ENCODE measurements at regions of chr2 and their contacts with region 1.

Region 1: GRCh38 chr2:160994141-160995002 is 165.9 kb upstream of the TANK start:
- DNase-seq: peak; percentile 66
- ATAC-seq: peak; percentile 81
- H3K4me3 Mint-ChIP-seq: no peak overlapping the region
- H3K27ac Mint-ChIP-seq: no peak overlapping the region; the same call in 1 of the 2 replicates
- H3K4me1 Mint-ChIP-seq: peaks cover 9% of the 10 kb centered on the region
- H3K27me3 Mint-ChIP-seq: no peaks in the 10 kb centered on the region
- CTCF ChIP-seq: peak; percentile 70

Region 2: DNA sequence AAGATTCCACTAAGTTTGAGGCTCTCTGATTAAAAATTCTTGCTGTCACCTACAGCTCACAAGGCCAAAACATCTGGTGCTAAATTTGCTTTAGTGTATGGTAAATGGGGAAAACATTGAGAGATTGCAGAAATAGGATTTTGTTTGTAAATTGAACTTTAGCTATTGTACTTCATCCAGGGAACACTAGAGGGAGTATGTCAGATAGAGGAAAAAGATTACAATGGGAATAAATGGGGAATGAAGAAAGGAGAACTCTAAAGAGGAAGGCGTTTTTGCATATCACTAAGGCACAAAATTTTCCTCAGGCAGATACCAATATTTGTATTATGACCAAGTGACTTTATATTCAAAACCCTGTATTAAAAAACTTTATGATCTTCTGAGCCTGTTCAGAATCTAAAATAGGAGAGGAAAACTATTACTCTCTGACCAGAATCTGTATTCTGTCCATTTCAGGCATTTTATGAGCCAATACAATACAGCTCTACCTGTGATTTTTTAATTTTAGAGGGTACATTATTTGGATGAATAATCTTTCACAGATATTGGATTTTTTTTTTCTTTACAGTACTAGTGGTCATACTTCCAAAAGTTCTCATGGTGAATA is 742.0 kb before region 1 on chr2:
- CTCF ChIA-PET with region 1: interaction called, 12 read pairs
- POLR2A ChIA-PET with region 1: no interaction called
- DNase-seq: no peak
- ATAC-seq: peak; percentile 18; the same call in 1 of the 2 replicates
- H3K4me3 Mint-ChIP-seq: no peak overlapping the region
- H3K27ac Mint-ChIP-seq: no peak overlapping the region
- H3K4me1 Mint-ChIP-seq: 0 out of 2 replicates have a peak, but pooled peaks cover 5% of the 10 kb centered on the region
- H3K27me3 Mint-ChIP-seq: no peaks in the 10 kb centered on the region
- CTCF ChIP-seq: peak; percentile 54; the same call in 1 of the 2 replicates

Region 3: GRCh38 chr2:160269803-160270570 is 724.4 kb before region 1 on chr2:
- CTCF ChIA-PET with region 1: interaction called, 10 read pairs
- POLR2A ChIA-PET with region 1: interaction called, 3 read pairs
- DNase-seq: peak; percentile 79
- ATAC-seq: peak; percentile 79
- H3K4me3 Mint-ChIP-seq: peak overlapping the region; percentile 72
- H3K27ac Mint-ChIP-seq: peak overlapping the region; percentile 92
- H3K4me1 Mint-ChIP-seq: peaks cover 36% of the 10 kb centered on the region
- H3K27me3 Mint-ChIP-seq: peaks cover 24% of the 10 kb centered on the region
- CTCF ChIP-seq: no peak

Region 4: DNA sequence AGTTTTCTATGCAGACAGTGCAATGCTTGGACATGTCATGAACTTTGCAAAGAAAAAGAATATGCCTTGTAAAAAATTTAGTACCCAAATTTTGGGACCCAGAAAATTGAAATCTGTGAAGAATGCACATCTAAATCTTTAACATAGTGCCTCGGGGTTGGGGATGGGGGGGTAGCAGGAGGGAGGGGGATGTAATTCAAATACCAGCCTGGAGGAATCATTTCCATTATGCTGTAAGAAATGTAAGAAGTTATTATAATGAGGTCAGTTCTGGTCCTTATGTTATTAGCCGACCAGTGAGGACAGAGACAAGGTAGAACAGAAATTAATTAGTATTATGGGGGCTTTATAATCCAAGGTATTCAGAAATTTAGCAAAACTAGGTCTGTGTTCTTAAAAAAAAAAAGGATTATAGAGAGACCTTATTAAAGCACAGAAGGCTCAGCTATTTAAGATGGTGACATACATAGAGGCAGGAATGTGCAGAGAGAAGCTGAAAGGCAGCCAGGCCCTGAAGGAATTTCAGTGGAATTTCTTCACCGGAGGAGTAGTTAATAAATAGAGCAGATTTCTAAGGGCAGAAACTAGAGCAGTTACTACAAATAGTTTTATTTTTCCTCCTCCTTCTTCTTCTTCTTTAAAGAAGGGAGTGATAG is 411.8 kb before region 1 on chr2:
- CTCF ChIA-PET with region 1: interaction called, 21 read pairs
- POLR2A ChIA-PET with region 1: no interaction called
- DNase-seq: no peak
- ATAC-seq: peak; percentile 65
- H3K4me3 Mint-ChIP-seq: no peak overlapping the region
- H3K27ac Mint-ChIP-seq: no peak overlapping the region
- H3K4me1 Mint-ChIP-seq: peaks cover 48% of the 10 kb centered on the region
- H3K27me3 Mint-ChIP-seq: no peaks in the 10 kb centered on the region
- CTCF ChIP-seq: no peak

Region 5: DNA sequence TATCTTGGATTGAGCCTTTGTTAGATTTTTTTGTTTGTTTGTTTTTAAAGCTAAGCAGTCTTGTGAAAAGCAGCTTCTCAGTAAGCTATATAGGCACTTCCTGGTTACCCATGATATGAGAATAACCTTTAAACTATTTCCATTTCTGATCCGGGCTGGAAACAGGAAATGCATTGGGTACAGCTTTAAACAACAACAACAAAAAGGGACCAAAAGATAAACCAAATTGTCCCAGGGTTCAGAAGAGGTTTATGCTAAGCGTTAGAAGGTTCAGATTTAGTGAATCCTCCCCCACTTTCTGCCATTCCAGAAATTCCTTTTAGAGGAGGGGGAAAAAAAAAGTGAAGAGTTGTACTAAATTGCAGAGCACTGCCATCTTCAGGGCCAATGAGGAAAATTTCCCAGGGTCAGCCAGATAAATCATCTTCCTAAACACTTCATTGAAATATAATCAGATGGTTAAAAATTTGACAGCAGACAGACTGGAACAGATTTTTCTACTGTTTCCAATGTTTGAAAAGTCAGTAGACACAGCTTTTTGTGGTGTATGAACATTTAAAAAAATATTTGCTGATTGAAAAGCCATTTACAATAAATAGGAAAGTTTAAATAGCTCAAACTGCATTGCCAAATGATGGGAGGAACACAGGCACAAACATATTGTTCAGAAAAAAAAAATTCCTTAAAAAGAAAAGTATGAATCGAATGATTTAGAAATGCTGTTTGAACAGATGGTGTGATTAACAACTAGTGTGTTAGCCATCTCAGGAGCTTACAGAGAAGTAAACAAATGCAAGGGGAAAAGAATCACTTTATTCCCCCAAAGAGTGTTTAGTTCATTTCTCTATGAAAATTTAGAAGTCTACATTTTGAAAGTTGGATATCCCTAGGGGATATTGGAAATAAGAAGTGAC is 24.1 kb before region 1 on chr2:
- CTCF ChIA-PET with region 1: interaction called, 15 read pairs
- POLR2A ChIA-PET with region 1: no interaction called
- DNase-seq: peak; percentile 29
- ATAC-seq: peak; percentile 91
- H3K4me3 Mint-ChIP-seq: no peak overlapping the region
- H3K27ac Mint-ChIP-seq: peak overlapping the region; percentile 94
- H3K4me1 Mint-ChIP-seq: peaks cover 8% of the 10 kb centered on the region
- H3K27me3 Mint-ChIP-seq: no peaks in the 10 kb centered on the region; the same call in 1 of the 2 replicates
- CTCF ChIP-seq: no peak

Region 6: DNA sequence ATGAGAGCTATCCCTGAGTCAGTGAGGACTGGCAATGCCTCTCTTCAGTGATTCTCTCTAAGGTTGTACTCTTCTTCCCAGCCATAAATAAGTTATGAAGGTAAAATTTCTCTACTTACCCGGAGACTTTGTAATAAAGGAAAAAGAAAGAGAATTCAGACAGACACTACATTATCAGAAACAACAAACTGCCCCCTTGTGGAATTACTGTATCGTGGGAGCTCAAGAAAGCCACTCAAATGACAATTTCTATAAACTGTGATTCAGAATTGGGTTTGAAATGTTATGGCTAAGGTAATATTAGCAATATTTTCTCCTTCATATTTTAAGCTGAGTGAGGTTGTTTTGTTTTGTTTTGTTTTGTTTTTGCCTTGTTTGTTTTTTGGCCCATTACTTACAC is 10.0 kb after region 1 on chr2:
- CTCF ChIA-PET with region 1: interaction called, 13 read pairs
- POLR2A ChIA-PET with region 1: no interaction called
- DNase-seq: no peak
- ATAC-seq: no peak
- H3K4me3 Mint-ChIP-seq: no peak overlapping the region
- H3K27ac Mint-ChIP-seq: no peak overlapping the region
- H3K4me1 Mint-ChIP-seq: peaks cover 9% of the 10 kb centered on the region
- H3K27me3 Mint-ChIP-seq: no peaks in the 10 kb centered on the region
- CTCF ChIP-seq: no peak

Region 7: DNA sequence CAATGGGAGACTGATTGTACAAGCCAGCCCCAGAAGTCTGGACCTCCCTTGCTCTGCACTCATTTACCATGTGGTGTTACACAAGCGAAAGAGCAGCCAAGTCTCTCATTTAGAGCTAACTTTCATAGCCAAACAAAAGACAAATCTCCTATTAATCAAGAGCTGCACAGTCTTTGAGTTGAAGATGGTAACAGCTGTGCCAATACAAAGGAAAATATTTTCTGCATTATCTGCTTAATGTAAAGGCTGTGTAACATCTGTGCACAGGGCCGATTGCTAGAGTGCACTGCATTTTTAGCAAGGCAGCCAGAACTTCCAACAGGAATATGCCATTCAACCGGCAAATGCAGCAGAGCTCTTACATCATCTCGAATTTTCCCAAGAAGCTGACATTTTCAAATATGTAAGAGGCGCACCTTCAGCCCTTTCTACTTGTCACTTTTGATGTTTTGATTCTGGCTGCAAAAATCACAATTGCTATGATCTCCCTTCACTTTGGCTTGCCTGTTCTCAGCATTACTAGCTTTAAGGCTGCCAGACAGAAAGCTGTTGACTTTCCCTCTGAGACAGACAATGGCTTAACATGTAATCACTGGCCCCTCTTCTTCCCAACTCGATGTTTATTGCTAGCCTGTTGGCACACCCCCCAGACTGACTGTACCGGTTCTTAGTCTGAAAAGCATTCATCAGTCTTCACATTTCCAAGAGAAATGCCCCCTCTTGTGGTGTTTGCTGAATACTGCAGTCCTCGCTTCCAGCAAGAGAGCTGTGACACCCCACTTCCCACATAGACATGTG is 69.0 kb after region 1 on chr2:
- CTCF ChIA-PET with region 1: interaction called, 14 read pairs
- POLR2A ChIA-PET with region 1: no interaction called
- DNase-seq: peak; percentile 79
- ATAC-seq: peak; percentile 97
- H3K4me3 Mint-ChIP-seq: no peak overlapping the region
- H3K27ac Mint-ChIP-seq: no peak overlapping the region
- H3K4me1 Mint-ChIP-seq: peaks cover 9% of the 10 kb centered on the region
- H3K27me3 Mint-ChIP-seq: no peaks in the 10 kb centered on the region
- CTCF ChIP-seq: peak; percentile 82

Region 8: GRCh38 chr2:161122772-161123530 is 128.6 kb after region 1 on chr2:
- CTCF ChIA-PET with region 1: no interaction called
- POLR2A ChIA-PET with region 1: no interaction called
- DNase-seq: no peak
- ATAC-seq: peak; percentile 57
- H3K4me3 Mint-ChIP-seq: no peak overlapping the region
- H3K27ac Mint-ChIP-seq: no peak overlapping the region
- H3K4me1 Mint-ChIP-seq: peaks cover 21% of the 10 kb centered on the region
- H3K27me3 Mint-ChIP-seq: no peaks in the 10 kb centered on the region
- CTCF ChIP-seq: no peak

Region 9: DNA sequence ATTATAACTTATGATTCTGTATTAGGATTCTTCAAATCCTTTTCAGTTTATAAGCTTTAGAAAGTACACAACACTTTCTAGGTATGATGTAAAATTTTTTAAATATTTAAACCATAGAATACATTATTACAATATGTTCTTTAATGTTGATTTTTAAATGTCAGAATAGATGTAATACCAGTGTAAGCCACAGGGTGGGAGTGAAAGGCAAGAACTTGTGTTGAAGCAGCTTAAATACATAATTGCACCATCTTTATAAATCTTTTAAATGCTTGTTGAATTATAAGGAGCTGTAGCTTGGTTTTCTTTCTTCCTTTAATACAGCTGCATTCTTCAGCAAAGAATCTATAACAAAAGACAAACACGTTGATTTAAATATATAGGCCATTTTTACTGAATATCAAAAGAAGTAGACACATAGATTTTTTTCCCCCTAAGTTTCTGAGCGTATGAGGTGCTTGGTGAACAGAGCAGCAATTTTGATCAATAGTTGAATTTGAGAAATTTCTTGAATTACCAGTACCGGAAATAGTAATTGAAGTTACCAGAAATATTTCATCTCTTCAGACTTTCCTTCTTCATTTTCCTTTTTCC is 228.9 kb after region 1 on chr2:
- CTCF ChIA-PET with region 1: no interaction called
- POLR2A ChIA-PET with region 1: no interaction called
- DNase-seq: no peak
- ATAC-seq: no peak; the same call in 1 of the 2 replicates
- H3K4me3 Mint-ChIP-seq: no peak overlapping the region
- H3K27ac Mint-ChIP-seq: no peak overlapping the region
- H3K4me1 Mint-ChIP-seq: peaks cover 5% of the 10 kb centered on the region
- H3K27me3 Mint-ChIP-seq: no peaks in the 10 kb centered on the region
- CTCF ChIP-seq: peak; percentile 73

Measured in WTC11 (cell line).